Gastrocnemius medialis (tissue), 4 donors: ENCODE measurements at regions of chr11 and their contacts with region 1.

Region 1: GRCh38 chr11:32602657-32603415 is 19.2 kb downstream of the EIF3M start:
- DNase-seq: no peak
- ATAC-seq: no peak
- H3K4me3 ChIP-seq: no peak overlapping the region
- H3K27ac ChIP-seq: no peak overlapping the region
- H3K4me1 ChIP-seq: no peaks in the 10 kb centered on the region
- H3K27me3 ChIP-seq: no peaks in the 10 kb centered on the region
- CTCF ChIP-seq: no peak
- POLR2A ChIP-seq: no peak

Region 2: GRCh38 chr11:31798554-31799434 is 804.0 kb before region 1 on chr11:
- in situ Hi-C with region 1: no loop called
- intact Hi-C with region 1: loop called (anchors 5 kb)
- DNase-seq: no peak
- ATAC-seq: no peak
- H3K4me3 ChIP-seq: peak overlapping the region; percentile 9 to 34 (median 22)
- H3K27ac ChIP-seq: no peak overlapping the region
- H3K4me1 ChIP-seq: peaks cover 9 to 25% of the 10 kb centered on the region in 2 donors
- H3K27me3 ChIP-seq: peaks cover 70 to 79% (median 73%) of the 10 kb centered on the region in 3 donors
- CTCF ChIP-seq: peak in 1 of 5 experiments; percentile 22
- POLR2A ChIP-seq: no peak